HEK293T (cell line): ENCODE measurements at regions of chr7 and their contacts with region 1.

Region 1: GRCh38 chr7:149753401-149754233 is 19.8 kb downstream of the ZNF467 start:
- DNase-seq: peak; percentile 79

Region 2: DNA sequence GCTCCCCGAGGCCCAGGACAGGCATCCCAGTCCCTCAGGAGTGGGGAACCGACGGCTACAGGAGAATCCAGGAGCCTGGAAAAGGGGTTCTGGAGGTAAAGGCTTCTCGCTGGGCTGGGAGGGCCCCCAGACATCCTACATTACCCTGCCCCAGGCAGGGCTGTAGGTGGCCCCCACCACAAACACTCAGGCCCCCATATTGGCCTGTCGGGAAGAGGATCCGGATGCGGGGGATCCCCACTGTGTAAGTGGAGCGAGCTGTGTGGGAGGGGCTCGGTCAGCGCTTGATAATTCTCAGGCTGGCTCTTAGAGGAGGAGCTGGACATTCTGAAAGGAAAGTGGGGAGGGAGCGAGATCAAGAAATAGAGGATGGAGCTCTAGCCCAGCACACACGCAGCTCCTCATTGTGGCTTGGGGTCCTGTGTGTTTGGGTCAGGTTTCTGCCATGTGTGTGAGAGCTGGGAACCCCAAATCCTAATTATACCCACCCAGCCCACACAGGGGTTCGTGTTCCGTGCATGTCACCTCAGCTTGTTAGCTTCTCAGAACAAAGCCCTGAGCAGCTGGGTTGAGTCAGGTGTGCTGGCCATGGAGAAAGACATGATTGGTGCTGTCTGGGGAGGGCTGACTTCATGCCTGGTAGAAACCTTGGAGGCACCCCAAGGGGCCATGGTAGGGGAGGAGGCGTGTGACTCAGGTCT is 29.7 kb before region 1 on chr7:
- CTCF ChIA-PET with region 1: no interaction called
- POLR2A ChIA-PET with region 1: no interaction called
- DNase-seq: no peak

Region 3: GRCh38 chr7:149742075-149742701 is 11.4 kb before region 1 on chr7:
- CTCF ChIA-PET with region 1: interaction called, 21 read pairs
- POLR2A ChIA-PET with region 1: interaction called, 6 read pairs
- DNase-seq: peak; percentile 96

Region 4: DNA sequence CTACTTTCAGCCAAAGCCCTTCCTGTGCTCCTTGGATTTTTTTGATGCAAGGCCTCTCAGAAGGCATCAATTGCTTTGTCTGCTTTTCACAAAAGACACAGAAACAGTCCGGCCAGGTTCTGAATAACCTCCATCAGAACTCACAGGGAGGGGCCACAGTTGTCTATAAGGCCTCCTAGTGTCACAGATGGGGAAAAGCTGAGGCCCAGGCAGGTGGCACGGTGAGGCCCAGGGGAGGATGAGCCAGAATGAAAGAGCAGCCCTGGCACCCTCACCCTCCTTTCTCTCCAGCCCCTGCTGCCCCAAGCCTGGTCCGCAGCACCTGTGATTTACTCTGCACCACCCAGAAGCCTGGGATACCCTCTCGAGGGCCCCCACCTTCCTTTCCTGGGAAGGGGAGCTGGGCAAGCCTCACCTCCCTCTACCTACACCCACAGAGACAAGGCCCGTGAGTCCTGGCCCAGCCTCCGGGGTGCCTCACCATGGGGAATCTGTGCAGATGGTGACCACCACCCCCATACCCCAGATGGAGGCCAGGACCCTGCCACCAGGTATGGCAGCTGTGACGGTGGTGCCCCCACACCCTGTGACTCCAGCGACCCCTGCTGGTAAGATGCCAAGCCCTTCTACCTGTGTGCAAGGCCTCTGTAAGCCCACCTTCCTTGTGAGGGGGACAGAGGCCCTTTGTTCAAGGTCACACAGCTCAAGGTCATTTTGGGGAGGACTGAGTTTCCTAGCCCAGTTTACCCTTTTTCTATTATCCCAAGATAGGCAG is 46.0 kb after region 1 on chr7:
- CTCF ChIA-PET with region 1: no interaction called
- POLR2A ChIA-PET with region 1: no interaction called
- DNase-seq: peak; percentile 78